ENCODE measurements at regions of chr1 and their contacts with region 1.

Region 1: GRCh38 chr1:33616773-33617172 is 144.3 kb downstream of the ZSCAN20 start:
- DNase-seq: no peak
- H3K4me3 ChIP-seq: no peak overlapping the region
- H3K27ac ChIP-seq: no peak overlapping the region
- H3K4me1 ChIP-seq: peaks cover 0 to 5% (median 1%) of the 10 kb centered on the region in 4 donors
- H3K27me3 ChIP-seq: peaks cover 0 to 20% (median 2%) of the 10 kb centered on the region in 4 donors
- CTCF ChIP-seq: no peak
- EP300 ChIP-seq: no peak
- POLR2A ChIP-seq: no peak

Region 2: DNA sequence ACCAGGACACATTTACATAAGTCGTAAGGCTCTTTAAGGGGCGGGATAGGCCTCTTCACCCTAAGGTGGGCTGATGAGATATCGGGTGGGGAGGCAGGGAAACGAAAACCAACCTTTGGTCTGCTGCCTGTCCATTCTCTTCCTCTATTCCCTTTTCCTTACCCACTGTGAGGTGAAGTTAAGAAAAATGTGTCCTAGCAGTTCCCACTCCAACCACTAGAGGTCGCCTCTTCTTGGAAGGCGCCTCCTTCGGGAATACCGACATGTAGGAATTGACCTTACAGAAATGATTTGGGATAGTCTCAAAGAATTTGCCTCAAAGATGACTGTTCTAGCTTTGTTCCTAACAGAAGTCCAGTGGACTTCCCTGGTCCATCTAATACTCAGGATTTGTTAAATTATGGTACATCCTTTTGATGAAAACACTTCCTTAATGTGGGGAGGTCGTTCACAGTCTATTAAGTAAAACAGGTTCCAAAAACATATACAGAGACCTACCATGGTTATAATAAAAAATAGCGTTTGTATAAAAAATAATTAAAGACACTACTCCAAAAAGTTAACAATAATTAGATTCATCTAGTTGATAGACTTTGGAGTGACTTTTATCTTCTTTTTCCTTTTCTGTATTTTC is 521.7 kb before region 1 on chr1:
- intact Hi-C with region 1: loop called (anchors 10 kb)
- DNase-seq: no peak
- H3K4me3 ChIP-seq: no peak overlapping the region
- H3K27ac ChIP-seq: no peak overlapping the region
- H3K4me1 ChIP-seq: peaks cover 0 to 6% (median 0%) of the 10 kb centered on the region in 4 donors
- H3K27me3 ChIP-seq: no peaks in the 10 kb centered on the region
- CTCF ChIP-seq: peak in 2 of 3 experiments; percentile 91 to 96
- EP300 ChIP-seq: no peak
- POLR2A ChIP-seq: no peak

Region 3: GRCh38 chr1:33560680-33561079 is 56.1 kb before region 1 on chr1:
- intact Hi-C with region 1: no loop called
- DNase-seq: no peak
- H3K4me3 ChIP-seq: no peak overlapping the region
- H3K27ac ChIP-seq: no peak overlapping the region
- H3K4me1 ChIP-seq: no peaks in the 10 kb centered on the region
- H3K27me3 ChIP-seq: no peaks in the 10 kb centered on the region
- CTCF ChIP-seq: no peak
- EP300 ChIP-seq: no peak
- POLR2A ChIP-seq: no peak

Region 4: DNA sequence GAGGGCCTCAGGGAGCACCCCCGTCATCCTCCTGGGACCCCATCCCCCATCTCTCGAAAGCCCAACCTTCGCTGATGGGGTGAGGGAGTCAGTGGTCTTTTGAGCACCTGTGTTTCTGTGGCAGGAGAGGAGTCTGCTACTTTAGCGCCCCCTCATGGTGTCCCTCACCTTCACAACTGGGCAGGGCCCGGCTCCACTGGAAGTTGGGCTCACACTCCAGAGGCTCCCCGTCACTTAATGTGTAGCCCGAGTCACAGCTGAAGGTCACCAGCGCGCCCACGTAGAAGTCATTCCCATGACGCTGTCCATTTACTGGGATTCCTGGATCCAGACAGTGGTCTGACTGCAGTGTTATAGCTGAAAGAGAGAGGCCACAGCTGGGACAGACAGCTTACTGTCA is 107.6 kb after region 1 on chr1:
- intact Hi-C with region 1: no loop called
- DNase-seq: no peak
- H3K4me3 ChIP-seq: no peak overlapping the region
- H3K27ac ChIP-seq: no peak overlapping the region
- H3K4me1 ChIP-seq: no peaks in the 10 kb centered on the region
- H3K27me3 ChIP-seq: peaks cover 0 to 5% (median 0%) of the 10 kb centered on the region in 4 donors
- CTCF ChIP-seq: no peak
- EP300 ChIP-seq: no peak
- POLR2A ChIP-seq: no peak